Left ventricle myocardium inferior (tissue), 1 donor: ENCODE measurements at regions of chr20 and their contacts with region 1.

Region 1: DNA sequence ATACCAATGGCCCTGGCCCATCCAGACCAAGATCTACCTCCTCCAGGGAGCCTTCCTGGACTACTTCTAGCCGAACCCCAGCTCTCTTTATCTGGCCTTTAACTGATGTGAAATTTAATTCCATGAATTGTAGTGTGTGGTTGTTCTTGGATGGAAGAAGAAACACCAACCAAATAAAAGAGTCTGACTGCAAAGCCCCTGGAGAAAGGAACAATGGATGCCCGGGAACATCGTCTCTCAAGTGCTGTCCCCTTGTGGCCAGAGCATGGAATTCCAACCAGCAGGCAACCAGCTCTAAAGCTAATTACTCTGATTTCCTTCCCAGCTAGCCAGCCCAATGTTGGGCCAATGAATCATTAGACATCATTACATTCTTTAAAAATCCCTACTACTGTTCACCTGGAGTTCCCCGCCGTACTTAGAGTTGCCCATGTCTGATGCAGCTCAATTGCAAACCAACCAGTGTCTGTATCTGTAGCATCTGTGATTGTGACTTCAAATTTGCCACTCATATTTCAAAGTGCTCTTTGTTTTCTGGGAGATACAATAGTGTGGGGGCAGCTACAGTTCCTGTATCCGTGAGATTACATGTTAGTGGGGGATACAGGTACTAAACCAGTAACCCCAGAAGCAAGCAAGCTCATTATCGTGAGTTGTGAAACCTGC is 141.1 kb downstream of the ANKRD60 start:
- DNase-seq: no peak
- H3K4me3 ChIP-seq: no peak overlapping the region
- H3K27ac ChIP-seq: no peak overlapping the region
- H3K4me1 ChIP-seq: no peaks in the 10 kb centered on the region
- H3K27me3 ChIP-seq: no peaks in the 10 kb centered on the region
- CTCF ChIP-seq: peak; percentile 92

Region 2: DNA sequence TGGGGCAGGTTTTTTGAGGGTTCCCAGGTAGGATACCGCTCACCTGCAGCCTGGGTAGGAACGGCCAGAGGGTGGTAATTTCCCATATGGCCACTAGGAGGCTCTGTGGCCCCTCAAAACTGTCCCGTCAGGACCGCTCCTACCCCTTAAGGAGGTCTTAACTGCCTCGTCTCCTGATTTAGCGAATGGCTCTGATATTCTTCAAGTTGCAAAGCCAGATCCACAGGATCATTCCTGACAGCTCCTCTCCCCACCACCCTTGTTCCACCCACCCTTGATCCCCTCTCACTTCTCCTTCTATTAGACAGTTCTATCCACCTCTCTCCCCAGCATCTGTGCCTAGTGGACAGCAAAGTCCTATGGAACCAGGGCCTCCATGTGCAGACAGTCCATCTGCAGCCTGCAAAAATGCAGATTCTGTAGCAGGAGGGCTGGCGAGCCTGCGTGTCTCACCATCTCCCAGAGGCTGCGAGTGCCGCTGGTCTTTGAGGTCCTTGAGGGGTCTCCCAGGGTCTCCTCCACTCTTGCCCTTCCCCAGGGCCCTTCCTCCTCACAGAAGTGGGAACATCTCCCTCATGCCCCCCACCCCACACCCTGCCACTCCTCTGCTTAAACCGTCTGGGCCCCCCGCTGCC is 432.8 kb before region 1 on chr20:
- intact Hi-C with region 1: loop called (anchors 5 kb)
- DNase-seq: no peak
- H3K4me3 ChIP-seq: no peak overlapping the region
- H3K27ac ChIP-seq: no peak overlapping the region
- H3K4me1 ChIP-seq: peaks cover 17% of the 10 kb centered on the region
- H3K27me3 ChIP-seq: no peaks in the 10 kb centered on the region
- CTCF ChIP-seq: peak; percentile 95

Region 3: GRCh38 chr20:58219301-58219700 is 132.0 kb after region 1 on chr20:
- intact Hi-C with region 1: no loop called
- DNase-seq: no peak
- H3K4me3 ChIP-seq: no peak overlapping the region
- H3K27ac ChIP-seq: no peak overlapping the region
- H3K4me1 ChIP-seq: no peaks in the 10 kb centered on the region
- H3K27me3 ChIP-seq: peaks cover 97% of the 10 kb centered on the region
- CTCF ChIP-seq: no peak